AG04449 (cell line): ENCODE measurements at regions of chr3 and their contacts with region 1.

Region 1: GRCh38 chr3:102673271-102674115 is 238.7 kb downstream of the ZPLD1 start:
- DNase-seq: no peak
- H3K4me3 ChIP-seq: no peak overlapping the region
- CTCF ChIP-seq: peak; percentile 75

Region 2: DNA sequence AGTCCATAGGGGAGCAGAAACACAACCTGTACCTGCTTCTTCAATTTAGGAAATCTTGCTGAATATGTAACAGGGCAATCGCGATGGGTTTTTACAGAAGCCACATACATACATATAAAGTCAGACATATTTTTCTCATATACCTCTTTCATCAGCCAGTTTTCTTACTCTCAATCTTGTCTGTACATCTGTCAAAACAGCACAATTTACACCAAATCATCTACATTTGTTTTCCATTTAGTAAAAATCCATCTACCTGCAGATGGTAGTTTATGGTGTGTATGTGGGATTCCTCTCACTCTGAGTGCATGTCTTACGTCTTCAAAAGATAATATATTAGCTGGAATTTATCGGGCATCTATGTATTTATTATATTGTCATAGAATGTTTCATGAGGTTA is 29.9 kb before region 1 on chr3:
- CTCF ChIA-PET with region 1: no interaction called
- POLR2A ChIA-PET with region 1: no interaction called
- DNase-seq: no peak
- H3K4me3 ChIP-seq: no peak overlapping the region
- CTCF ChIP-seq: no peak

Region 3: DNA sequence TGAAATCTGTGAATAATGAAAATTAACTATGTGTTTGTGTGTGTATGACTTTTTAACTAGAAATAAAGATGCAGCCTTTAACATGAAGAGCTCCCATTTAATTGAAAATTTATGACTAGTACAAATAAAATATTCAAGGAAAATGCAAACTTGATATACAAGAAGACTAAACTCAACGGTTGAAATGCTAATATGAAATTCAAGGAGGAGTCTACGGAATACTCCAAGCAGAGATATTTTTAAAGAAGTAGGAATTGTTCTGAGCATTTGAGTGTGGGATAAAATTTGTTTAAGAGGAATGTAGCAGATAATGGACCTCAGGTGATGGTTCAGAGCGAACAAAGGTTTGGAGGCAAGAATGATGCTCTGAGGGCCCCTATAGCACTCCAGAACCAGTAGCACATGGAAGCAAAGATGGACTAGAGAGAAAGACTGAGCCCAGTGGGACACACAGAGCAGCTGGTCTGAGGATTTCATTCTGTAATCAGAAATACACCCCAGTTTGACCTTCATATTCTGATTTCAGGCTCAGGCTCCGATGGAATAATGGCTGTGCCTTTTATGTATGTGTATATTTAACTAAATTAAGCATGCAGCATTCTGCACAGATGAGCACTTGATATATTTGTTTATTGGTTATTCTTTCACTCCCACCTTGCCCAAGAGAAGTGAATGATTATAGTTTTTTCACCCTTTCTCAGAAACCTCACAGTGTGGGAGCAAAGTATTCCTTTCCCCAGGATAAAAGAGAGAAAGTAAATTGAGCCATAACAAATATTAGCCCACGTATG is 11.6 kb before region 1 on chr3:
- CTCF ChIA-PET with region 1: interaction called, 16 read pairs
- POLR2A ChIA-PET with region 1: no interaction called
- DNase-seq: no peak
- H3K4me3 ChIP-seq: no peak overlapping the region
- CTCF ChIP-seq: no peak